ENCODE measurements at regions of chr15 and their contacts with region 1.

Region 1: DNA sequence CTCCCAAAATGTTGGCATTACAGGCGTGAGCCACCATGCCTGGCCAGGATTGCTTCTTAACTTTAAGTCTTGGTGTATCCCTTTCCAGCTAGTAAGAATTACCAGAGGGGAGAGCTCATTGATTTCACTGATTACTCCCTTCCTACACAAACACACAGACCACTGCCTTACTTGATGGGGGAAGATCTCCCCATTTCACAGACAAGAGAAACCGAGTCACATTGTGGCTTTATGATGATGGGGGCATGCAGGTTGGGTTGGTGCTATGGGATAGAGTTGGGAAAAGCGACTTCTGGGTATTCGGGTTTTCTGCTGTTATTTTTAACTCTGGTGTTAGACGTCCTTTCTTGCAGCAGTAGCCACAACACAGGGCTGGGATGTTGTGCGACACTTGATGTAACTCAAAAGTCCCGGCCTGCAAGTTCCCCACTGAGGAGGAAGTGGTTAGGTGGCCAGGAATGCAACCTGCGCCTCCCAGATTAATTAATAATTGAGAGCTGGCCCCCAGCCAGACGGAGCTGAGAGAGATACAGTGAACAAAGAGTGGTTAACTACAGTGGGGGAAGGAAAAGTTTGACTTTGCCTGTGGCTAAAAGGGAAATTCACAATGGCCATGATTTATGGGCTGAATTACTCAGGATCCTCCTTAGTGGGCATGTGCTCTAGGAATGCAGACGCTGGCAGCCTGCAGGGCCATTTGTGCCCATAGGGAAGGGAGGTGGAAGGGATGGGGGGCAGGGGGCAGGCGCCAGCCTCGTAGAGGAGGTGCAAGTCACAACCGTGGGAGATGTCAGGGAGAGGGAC is 63.6 kb downstream of the SMAD6 start:
- DNase-seq: peak; percentile 93
- ATAC-seq: peak; percentile 70
- H3K4me3 ChIP-seq: no peak overlapping the region
- H3K27ac ChIP-seq: peak overlapping the region; percentile 60
- H3K4me1 ChIP-seq: peaks cover 96% of the 10 kb centered on the region
- H3K27me3 ChIP-seq: no peaks in the 10 kb centered on the region
- CTCF ChIP-seq: no peak
- EP300 ChIP-seq: peak in 1 of 2 experiments; percentile 63; a peak in 2 of 4 replicates
- POLR2A ChIP-seq: no peak
- RAD21 ChIP-seq: no peak

Region 2: GRCh38 chr15:66751541-66751952 is 14.1 kb before region 1 on chr15:
- CTCF ChIA-PET with region 1: no interaction called
- POLR2A ChIA-PET with region 1: interaction called, 23 read pairs
- in situ Hi-C with region 1: no loop called
- intact Hi-C with region 1: no loop called
- DNase-seq: peak; percentile 60
- ATAC-seq: peak; percentile 37; the same call in 2 of the 3 replicates
- H3K4me3 ChIP-seq: no peak overlapping the region
- H3K27ac ChIP-seq: no peak overlapping the region
- H3K4me1 ChIP-seq: peaks cover 57% of the 10 kb centered on the region
- H3K27me3 ChIP-seq: no peaks in the 10 kb centered on the region
- CTCF ChIP-seq: no peak
- EP300 ChIP-seq: no peak
- POLR2A ChIP-seq: no peak
- RAD21 ChIP-seq: no peak

Measured in HepG2 (cell line).